HEK293 (cell line): ENCODE measurements at regions of chr15 and their contacts with region 1.

Region 1: GRCh38 chr15:68550481-68551295 is 28.1 kb upstream of the CORO2B start:
- H3K4me3 ChIP-seq: no peak overlapping the region
- H3K27ac ChIP-seq: no peak overlapping the region
- H3K4me1 ChIP-seq: no peaks in the 10 kb centered on the region
- CTCF ChIP-seq: peak; percentile 78

Region 2: GRCh38 chr15:68145706-68146105 is 405.0 kb before region 1 on chr15:
- CTCF ChIA-PET with region 1: no interaction called
- POLR2A ChIA-PET with region 1: no interaction called
- H3K4me3 ChIP-seq: no peak overlapping the region
- H3K27ac ChIP-seq: no peak overlapping the region
- H3K4me1 ChIP-seq: no peaks in the 10 kb centered on the region
- CTCF ChIP-seq: no peak

Region 3: GRCh38 chr15:68421115-68421551 is 129.6 kb before region 1 on chr15:
- CTCF ChIA-PET with region 1: no interaction called
- POLR2A ChIA-PET with region 1: no interaction called
- H3K4me3 ChIP-seq: no peak overlapping the region
- H3K27ac ChIP-seq: no peak overlapping the region
- H3K4me1 ChIP-seq: peaks cover 5% of the 10 kb centered on the region; the same call in 1 of the 2 replicates
- CTCF ChIP-seq: no peak

Region 4: GRCh38 chr15:68536331-68537095 is 14.2 kb before region 1 on chr15:
- CTCF ChIA-PET with region 1: interaction called, 49 read pairs
- POLR2A ChIA-PET with region 1: no interaction called
- H3K4me3 ChIP-seq: no peak overlapping the region
- H3K27ac ChIP-seq: no peak overlapping the region
- H3K4me1 ChIP-seq: no peaks in the 10 kb centered on the region
- CTCF ChIP-seq: no peak

Region 5: GRCh38 chr15:68565726-68566125 is 15.0 kb after region 1 on chr15:
- CTCF ChIA-PET with region 1: interaction called, 25 read pairs
- POLR2A ChIA-PET with region 1: no interaction called
- H3K4me3 ChIP-seq: no peak overlapping the region
- H3K27ac ChIP-seq: no peak overlapping the region
- H3K4me1 ChIP-seq: no peaks in the 10 kb centered on the region
- CTCF ChIP-seq: no peak

Region 6: GRCh38 chr15:68666120-68666811 is 115.6 kb after region 1 on chr15:
- CTCF ChIA-PET with region 1: interaction called, 421 read pairs
- POLR2A ChIA-PET with region 1: no interaction called
- H3K4me3 ChIP-seq: no peak overlapping the region
- H3K27ac ChIP-seq: no peak overlapping the region
- H3K4me1 ChIP-seq: no peaks in the 10 kb centered on the region
- CTCF ChIP-seq: no peak

Region 7: GRCh38 chr15:68700455-68701123 is 149.9 kb after region 1 on chr15:
- CTCF ChIA-PET with region 1: interaction called, 10 read pairs
- POLR2A ChIA-PET with region 1: no interaction called
- H3K4me3 ChIP-seq: no peak overlapping the region
- H3K27ac ChIP-seq: peak overlapping the region; percentile 54
- H3K4me1 ChIP-seq: peaks cover 6% of the 10 kb centered on the region
- CTCF ChIP-seq: peak; percentile 57

Region 8: GRCh38 chr15:68885070-68885469 is 334.4 kb after region 1 on chr15:
- CTCF ChIA-PET with region 1: interaction called, 13 read pairs
- POLR2A ChIA-PET with region 1: no interaction called
- H3K4me3 ChIP-seq: no peak overlapping the region
- H3K27ac ChIP-seq: no peak overlapping the region
- H3K4me1 ChIP-seq: no peaks in the 10 kb centered on the region
- CTCF ChIP-seq: no peak